ENCODE measurements at regions of chrX and their contacts with region 1.

Region 1: GRCh38 chrX:108020631-108021030 is 24.2 kb upstream of the VSIG1 start:
- H3K4me3 Mint-ChIP-seq: no peak overlapping the region
- H3K27ac Mint-ChIP-seq: no peak overlapping the region
- H3K4me1 Mint-ChIP-seq: peaks cover 7% of the 10 kb centered on the region
- H3K27me3 Mint-ChIP-seq: no peaks in the 10 kb centered on the region

Region 2: GRCh38 chrX:107924136-107924746 is 96.4 kb before region 1 on chrX:
- intact Hi-C with region 1: no loop called
- H3K4me3 Mint-ChIP-seq: no peak overlapping the region
- H3K27ac Mint-ChIP-seq: no peak overlapping the region
- H3K4me1 Mint-ChIP-seq: no peaks in the 10 kb centered on the region
- H3K27me3 Mint-ChIP-seq: peaks cover 2% of the 10 kb centered on the region

Region 3: DNA sequence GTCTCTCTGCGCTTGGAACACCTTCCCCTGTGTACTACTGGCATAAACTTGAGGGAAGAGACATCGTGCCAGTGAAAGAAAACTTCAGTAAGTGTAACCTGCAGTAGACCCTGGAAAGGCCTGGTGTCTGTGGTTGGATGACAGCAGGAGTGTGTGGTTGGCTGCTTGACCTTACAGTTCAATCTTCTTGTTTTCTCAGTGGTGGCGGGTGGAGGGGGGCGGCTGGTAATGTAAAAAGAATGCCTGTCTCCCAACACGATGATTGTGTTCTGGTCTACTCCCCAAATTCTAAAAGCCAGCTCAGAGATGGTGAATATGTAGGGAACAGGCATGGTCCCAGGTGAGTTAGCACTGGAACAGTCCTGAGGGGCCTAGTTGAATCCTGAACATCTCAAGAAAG is 52.1 kb after region 1 on chrX:
- intact Hi-C with region 1: loop called (anchors 1 kb)
- H3K4me3 Mint-ChIP-seq: no peak overlapping the region
- H3K27ac Mint-ChIP-seq: no peak overlapping the region
- H3K4me1 Mint-ChIP-seq: no peaks in the 10 kb centered on the region
- H3K27me3 Mint-ChIP-seq: peaks cover 9% of the 10 kb centered on the region

Region 4: GRCh38 chrX:108091266-108091877 is 70.7 kb after region 1 on chrX and contains the starts of genes ATG4A and PSMD10:
- intact Hi-C with region 1: no loop called
- H3K4me3 Mint-ChIP-seq: no peak within 1 kb of the TSS
- H3K27ac Mint-ChIP-seq: no peak within 1 kb of the TSS
- H3K4me1 Mint-ChIP-seq: no peaks in the 10 kb centered on the region
- H3K27me3 Mint-ChIP-seq: no peaks in the 10 kb centered on the region

Region 5: GRCh38 chrX:108138814-108139702 is 118.4 kb after region 1 on chrX:
- intact Hi-C with region 1: loop called (anchors 2 kb)
- H3K4me3 Mint-ChIP-seq: no peak overlapping the region
- H3K27ac Mint-ChIP-seq: no peak overlapping the region
- H3K4me1 Mint-ChIP-seq: no peaks in the 10 kb centered on the region
- H3K27me3 Mint-ChIP-seq: no peaks in the 10 kb centered on the region

Measured in dendritic cell treated with granulocyte-macrophage colony-stimulating factor and Interleukin-4, amounts not matched to agents 40 ng/mL and 50 ng/mL, for 4 days (primary cell).